ENCODE measurements at regions of chr1 and their contacts with region 1.

Region 1: DNA sequence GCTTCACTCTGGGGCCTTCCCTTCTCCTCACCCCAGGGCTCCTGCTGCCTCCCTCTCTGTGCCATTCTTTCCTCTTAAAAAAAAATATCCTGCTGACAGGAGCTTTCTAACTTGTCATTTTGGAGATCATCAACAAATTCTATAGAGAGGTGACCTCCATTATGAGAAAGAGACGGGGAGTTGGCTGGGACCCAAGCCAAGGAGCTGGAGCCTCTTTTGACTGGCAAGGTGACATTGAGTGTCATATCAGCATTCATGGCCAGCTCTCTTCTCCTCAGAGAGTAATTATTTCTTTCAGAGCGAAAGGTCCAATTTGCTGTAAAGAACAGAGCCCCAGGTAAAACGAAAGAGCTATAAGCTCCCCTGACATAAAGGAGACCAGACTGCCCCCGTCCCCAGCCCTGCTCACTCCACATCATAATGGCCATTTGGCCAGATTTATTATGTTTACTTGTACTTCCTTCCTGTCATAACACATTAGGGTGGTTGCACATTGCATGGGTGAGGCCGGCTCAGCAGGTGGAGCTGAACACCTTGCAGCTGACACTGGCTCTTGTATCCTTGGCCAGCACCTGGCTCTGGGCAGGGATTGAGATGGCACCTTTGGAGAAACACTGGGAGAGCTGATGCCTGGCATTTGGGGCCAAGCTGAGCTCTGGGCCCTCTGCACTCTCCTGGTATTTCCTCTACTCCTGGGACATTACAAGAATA is 404.0 kb upstream of the VAMP3 start:
- DNase-seq: peak in 4 of 5 donors; percentile 30 to 61 (median 45)
- ATAC-seq: peak in 1 of 4 donors; percentile 2
- H3K4me3 ChIP-seq: no peak overlapping the region
- H3K27ac ChIP-seq: peak overlapping the region; percentile 32 to 86 (median 74)
- H3K4me1 ChIP-seq: peaks cover 0 to 41% (median 6%) of the 10 kb centered on the region in 12 donors
- H3K27me3 ChIP-seq: no peaks in the 10 kb centered on the region
- CTCF ChIP-seq: no peak
- POLR2A ChIP-seq: no peak

Region 2: GRCh38 chr1:7290971-7291970 is 75.8 kb before region 1 on chr1:
- intact Hi-C with region 1: loop called in 4 of 10 experiments (anchors 1 to 10 kb)
- DNase-seq: peak; percentile 68 to 83 (median 75)
- ATAC-seq: peak; percentile 89 to 95 (median 92)
- H3K4me3 ChIP-seq: no peak overlapping the region
- H3K27ac ChIP-seq: peak overlapping the region; percentile 0 to 85 (median 65)
- H3K4me1 ChIP-seq: peaks cover 0 to 27% (median 10%) of the 10 kb centered on the region in 12 donors
- H3K27me3 ChIP-seq: no peaks in the 10 kb centered on the region
- CTCF ChIP-seq: no peak
- POLR2A ChIP-seq: no peak

Region 3: DNA sequence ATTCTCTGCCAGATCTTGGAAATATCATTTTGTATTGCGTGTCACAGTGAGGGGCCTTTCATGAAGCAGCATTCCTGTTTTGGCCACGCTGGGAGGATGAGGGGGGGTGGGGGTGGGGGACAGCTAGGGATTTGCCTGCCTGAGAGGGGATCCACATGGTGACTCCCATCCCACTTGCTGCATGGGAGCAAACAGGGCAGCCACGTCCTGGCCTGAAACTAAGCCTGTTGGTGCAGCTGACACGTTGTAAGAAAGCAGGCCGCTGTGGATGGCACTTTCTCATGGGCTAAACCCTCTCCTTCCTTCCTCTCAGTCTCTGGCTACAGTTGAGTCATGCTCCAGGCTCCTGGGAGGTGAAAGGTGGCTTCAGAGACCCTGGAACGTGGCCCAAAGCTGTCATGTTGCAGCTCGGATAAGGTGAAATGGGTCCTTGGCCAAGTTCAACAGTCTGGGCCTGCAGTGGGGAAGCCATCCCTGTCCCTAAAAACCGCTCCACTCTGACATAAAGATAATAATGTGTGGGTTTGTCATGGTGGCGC is 57.3 kb after region 1 on chr1:
- intact Hi-C with region 1: no loop called
- DNase-seq: peak in 2 of 5 donors; percentile 17 to 24
- ATAC-seq: no peak
- H3K4me3 ChIP-seq: no peak overlapping the region
- H3K27ac ChIP-seq: no peak overlapping the region
- H3K4me1 ChIP-seq: peaks cover 0 to 7% (median 0%) of the 10 kb centered on the region in 12 donors
- H3K27me3 ChIP-seq: no peaks in the 10 kb centered on the region
- CTCF ChIP-seq: no peak
- POLR2A ChIP-seq: no peak

Region 4: DNA sequence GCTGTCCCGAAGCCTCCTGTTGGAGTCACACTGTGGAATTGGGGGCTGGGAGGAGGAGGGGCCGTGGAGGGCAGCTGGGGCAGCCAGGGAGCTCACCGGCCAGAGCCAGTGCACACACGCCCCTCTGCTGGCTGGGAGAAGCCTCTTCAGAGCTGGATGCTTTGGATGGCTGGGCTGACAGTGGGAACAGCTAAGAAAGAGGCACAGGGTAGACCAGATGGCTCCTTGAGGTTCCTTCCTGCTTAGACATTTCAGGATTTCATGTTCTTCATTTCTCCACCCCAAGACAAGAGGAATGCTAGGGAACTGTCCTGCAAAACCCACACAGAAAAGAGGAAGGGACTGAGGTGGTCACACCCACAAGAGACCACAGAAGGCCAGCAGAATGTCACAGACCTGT is 149.2 kb after region 1 on chr1:
- intact Hi-C with region 1: loop called in 1 of 10 experiments (anchors 5 kb)
- DNase-seq: peak in 4 of 5 donors; percentile 30 to 59 (median 39)
- ATAC-seq: peak; percentile 30 to 75 (median 47)
- H3K4me3 ChIP-seq: no peak overlapping the region
- H3K27ac ChIP-seq: peak overlapping the region in 1 of 12 donors; percentile 36
- H3K4me1 ChIP-seq: peaks cover 0 to 28% (median 6%) of the 10 kb centered on the region in 12 donors
- H3K27me3 ChIP-seq: no peaks in the 10 kb centered on the region
- CTCF ChIP-seq: peak in 4 of 12 donors; percentile 10 to 28 (median 20)
- POLR2A ChIP-seq: no peak

Region 5: DNA sequence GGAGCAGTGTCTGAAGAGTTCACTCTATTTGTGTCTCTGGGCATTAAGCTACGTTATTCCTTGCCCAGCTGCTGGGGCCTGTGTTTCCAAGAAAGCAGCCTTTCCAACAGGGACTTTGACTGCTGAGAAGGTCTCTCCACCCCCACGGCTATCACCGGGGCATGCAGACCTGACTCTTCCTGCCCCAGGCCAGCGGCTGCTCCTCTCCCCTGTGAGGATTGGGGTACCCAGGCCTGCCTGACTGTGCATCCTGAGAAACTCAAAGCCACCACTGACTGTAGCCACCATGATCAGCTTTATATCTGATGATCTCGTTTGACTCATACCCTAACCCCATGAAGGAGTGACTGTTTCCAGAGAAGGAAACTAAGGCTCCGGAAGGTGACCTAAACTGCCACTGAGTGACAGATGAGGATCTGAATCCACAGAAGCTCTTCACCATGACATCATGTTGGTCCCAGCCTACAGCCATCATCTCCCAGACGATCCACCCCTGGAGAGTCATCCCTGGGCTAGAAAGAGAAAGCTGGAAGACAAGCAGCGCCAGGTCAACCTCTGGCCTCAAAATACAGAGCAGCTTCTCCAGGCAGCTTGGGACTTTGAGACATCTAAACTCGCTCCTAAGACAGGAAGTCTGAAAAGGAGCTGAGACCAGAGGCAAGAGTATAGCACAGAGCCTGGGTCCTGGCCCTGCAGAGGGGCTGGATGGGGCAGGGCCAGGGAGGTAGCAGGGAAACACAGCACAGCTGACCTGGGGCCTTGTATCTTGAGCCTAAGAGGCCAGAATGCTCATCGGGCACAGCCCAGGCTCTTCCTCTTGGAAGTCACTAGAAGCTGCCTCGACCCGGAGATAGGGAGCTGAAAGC is 160.0 kb after region 1 on chr1:
- intact Hi-C with region 1: loop called in 1 of 10 experiments (anchors 1 kb)
- DNase-seq: peak in 2 of 5 donors; percentile 18 to 29
- ATAC-seq: no peak
- H3K4me3 ChIP-seq: no peak overlapping the region
- H3K27ac ChIP-seq: no peak overlapping the region
- H3K4me1 ChIP-seq: peaks cover 0 to 3% (median 0%) of the 10 kb centered on the region in 12 donors
- H3K27me3 ChIP-seq: no peaks in the 10 kb centered on the region
- CTCF ChIP-seq: no peak
- POLR2A ChIP-seq: no peak

Measured in heart left ventricle (tissue), 16 donors.